Gastrocnemius medialis (tissue), 4 donors: ENCODE measurements at regions of chr1 and their contacts with region 1.

Region 1: GRCh38 chr1:170758992-170759391 is 95.1 kb downstream of the PRRX1 start:
- DNase-seq: no peak
- ATAC-seq: peak; percentile 97 to 100
- H3K4me3 ChIP-seq: no peak overlapping the region
- H3K27ac ChIP-seq: peak overlapping the region; percentile 3 to 54 (median 34)
- H3K4me1 ChIP-seq: peaks cover 3 to 11% of the 10 kb centered on the region in 2 donors
- H3K27me3 ChIP-seq: no peaks in the 10 kb centered on the region
- CTCF ChIP-seq: no peak
- POLR2A ChIP-seq: no peak

Region 2: GRCh38 chr1:170619241-170620028 is 139.6 kb before region 1 on chr1:
- in situ Hi-C with region 1: no loop called
- intact Hi-C with region 1: no loop called
- DNase-seq: peak; percentile 12 to 22
- ATAC-seq: peak; percentile 34 to 56
- H3K4me3 ChIP-seq: peak overlapping the region in 1 of 4 donors; percentile 3
- H3K27ac ChIP-seq: peak overlapping the region; percentile 55 to 71 (median 66)
- H3K4me1 ChIP-seq: peaks cover 25 to 32% of the 10 kb centered on the region in 2 donors
- H3K27me3 ChIP-seq: no peaks in the 10 kb centered on the region
- CTCF ChIP-seq: no peak
- POLR2A ChIP-seq: no peak

Region 3: DNA sequence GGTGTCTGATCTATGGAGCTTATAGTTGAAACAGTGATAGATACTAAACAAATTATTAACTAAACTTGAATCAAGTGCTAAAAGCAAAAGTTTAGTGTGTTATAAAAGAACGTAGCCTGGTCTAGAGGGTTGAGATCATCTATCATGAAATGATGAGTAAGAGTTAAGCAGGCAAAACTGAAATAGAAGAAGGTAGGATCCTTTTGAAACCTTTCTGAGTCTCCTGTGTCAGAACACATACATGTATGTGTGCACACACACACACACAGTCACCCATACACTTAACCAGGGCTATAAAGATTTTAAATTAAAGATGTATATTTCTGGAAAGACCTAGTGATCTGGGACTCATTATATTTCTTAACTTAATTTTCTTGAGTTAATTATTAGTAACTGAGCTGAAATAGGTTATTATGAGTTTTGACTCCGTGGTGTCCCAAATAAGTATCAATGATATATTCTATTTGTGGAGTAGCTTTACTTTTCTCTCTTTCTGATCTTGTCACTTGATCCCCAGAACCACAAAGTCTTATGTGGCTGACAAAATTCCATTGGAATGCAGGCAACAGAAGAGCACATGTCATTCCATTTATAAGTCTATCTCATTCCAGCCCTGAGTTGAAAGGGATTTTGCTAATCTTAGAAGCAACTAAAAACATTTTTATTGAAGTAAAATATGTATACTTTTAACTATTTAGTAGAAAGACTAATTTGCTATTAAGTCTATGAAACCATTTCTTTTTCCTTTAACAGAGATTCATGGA is 24.4 kb before region 1 on chr1:
- in situ Hi-C with region 1: no loop called
- intact Hi-C with region 1: loop called (anchors 2 kb)
- DNase-seq: no peak
- ATAC-seq: peak; percentile 58 to 67
- H3K4me3 ChIP-seq: no peak overlapping the region
- H3K27ac ChIP-seq: peak overlapping the region; percentile 85 to 95 (median 90)
- H3K4me1 ChIP-seq: peaks cover 69 to 74% of the 10 kb centered on the region in 2 donors
- H3K27me3 ChIP-seq: no peaks in the 10 kb centered on the region
- CTCF ChIP-seq: no peak
- POLR2A ChIP-seq: peak in 1 of 2 donors; percentile 20